Heart right ventricle (tissue), 16 donors: ENCODE measurements at regions of chr20 and their contacts with region 1.

Region 1: GRCh38 chr20:4171538-4172116 is 156.3 kb upstream of the RNF24 start:
- DNase-seq: no peak
- ATAC-seq: peak in 2 of 8 donors; percentile 5 to 36
- H3K4me3 ChIP-seq: peak overlapping the region; percentile 3 to 66 (median 60)
- H3K27ac ChIP-seq: peak overlapping the region in 7 of 10 donors; percentile 16 to 78 (median 45)
- H3K4me1 ChIP-seq: peaks cover 0 to 23% (median 12%) of the 10 kb centered on the region in 9 donors
- H3K27me3 ChIP-seq: no peaks in the 10 kb centered on the region
- CTCF ChIP-seq: no peak

Region 2: GRCh38 chr20:4102381-4102780 is 69.2 kb before region 1 on chr20:
- intact Hi-C with region 1: loop called in 1 of 10 experiments (anchors 2 kb)
- DNase-seq: no peak
- ATAC-seq: no peak
- H3K4me3 ChIP-seq: no peak overlapping the region
- H3K27ac ChIP-seq: no peak overlapping the region
- H3K4me1 ChIP-seq: no peaks in the 10 kb centered on the region
- H3K27me3 ChIP-seq: peaks cover 0 to 3% (median 0%) of the 10 kb centered on the region in 7 donors
- CTCF ChIP-seq: no peak